Caco-2 (cell line): ENCODE measurements at regions of chr4 and their contacts with region 1.

Region 1: DNA sequence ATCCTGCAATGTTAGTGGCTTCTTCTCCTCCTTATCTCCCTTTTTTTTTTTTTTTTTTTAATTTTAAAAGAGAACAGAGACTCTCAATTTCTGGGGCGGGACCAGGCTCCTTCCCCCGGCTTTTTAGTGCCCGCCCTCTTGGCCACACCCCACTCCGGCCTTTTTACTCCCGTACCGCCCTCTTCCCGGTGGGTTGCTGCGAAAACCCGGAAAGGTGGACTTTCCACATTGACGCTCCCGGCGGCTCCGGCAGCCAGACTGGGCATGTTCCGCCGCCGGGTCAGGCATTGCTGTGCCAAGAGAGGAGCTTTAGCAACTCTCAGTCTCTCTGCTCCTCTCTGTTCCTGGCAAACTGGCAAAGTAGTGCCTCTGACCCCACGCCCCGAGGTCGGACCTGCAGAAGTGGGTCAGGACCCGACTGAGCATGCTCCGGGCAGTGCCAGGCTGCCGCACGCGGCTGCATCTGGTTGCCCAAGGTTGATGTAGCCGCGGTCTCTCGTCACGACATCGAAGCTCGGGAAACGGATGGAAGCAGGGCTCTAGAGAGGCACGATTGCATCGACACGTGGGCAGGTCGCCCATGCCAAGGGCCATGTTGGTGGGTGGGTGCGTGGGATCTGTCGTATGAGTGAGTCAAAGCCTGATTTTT is 1.1 kb upstream of the MFAP3L start:
- DNase-seq: peak; percentile 93 to 94
- H3K4me3 ChIP-seq: peak overlapping the region; percentile 78
- H3K4me3 Mint-ChIP-seq: peak overlapping the region; percentile 84
- H3K27ac Mint-ChIP-seq: peak overlapping the region; percentile 51
- H3K4me1 ChIP-seq: no peaks in the 10 kb centered on the region; the same call in 1 of the 2 replicates
- H3K4me1 Mint-ChIP-seq: no peaks in the 10 kb centered on the region
- H3K27me3 ChIP-seq: peaks cover 4% of the 10 kb centered on the region
- H3K27me3 Mint-ChIP-seq: peaks cover 17% of the 10 kb centered on the region
- CTCF ChIP-seq: no peak

Region 2: GRCh38 chr4:169757575-169758184 is 269.6 kb before region 1 on chr4 and contains the start of gene HPF1:
- CTCF ChIA-PET with region 1: no interaction called
- POLR2A ChIA-PET with region 1: no interaction called
- intact Hi-C with region 1: loop called (anchors 1 kb)
- DNase-seq: peak; percentile 92
- H3K4me3 ChIP-seq: peak within 1 kb of the TSS; percentile 81
- H3K4me3 Mint-ChIP-seq: peak within 1 kb of the TSS; percentile 77
- H3K27ac Mint-ChIP-seq: peak within 1 kb of the TSS; percentile 5
- H3K4me1 ChIP-seq: 0 out of 2 replicates have a peak, but pooled peaks cover 5% of the 10 kb centered on the region
- H3K4me1 Mint-ChIP-seq: peaks cover 12% of the 10 kb centered on the region
- H3K27me3 ChIP-seq: no peaks in the 10 kb centered on the region
- H3K27me3 Mint-ChIP-seq: no peaks in the 10 kb centered on the region
- CTCF ChIP-seq: no peak
- total RNA-seq, gene HPF1: 9.7 and 14.9 TPM in 2 replicates

Region 3: DNA sequence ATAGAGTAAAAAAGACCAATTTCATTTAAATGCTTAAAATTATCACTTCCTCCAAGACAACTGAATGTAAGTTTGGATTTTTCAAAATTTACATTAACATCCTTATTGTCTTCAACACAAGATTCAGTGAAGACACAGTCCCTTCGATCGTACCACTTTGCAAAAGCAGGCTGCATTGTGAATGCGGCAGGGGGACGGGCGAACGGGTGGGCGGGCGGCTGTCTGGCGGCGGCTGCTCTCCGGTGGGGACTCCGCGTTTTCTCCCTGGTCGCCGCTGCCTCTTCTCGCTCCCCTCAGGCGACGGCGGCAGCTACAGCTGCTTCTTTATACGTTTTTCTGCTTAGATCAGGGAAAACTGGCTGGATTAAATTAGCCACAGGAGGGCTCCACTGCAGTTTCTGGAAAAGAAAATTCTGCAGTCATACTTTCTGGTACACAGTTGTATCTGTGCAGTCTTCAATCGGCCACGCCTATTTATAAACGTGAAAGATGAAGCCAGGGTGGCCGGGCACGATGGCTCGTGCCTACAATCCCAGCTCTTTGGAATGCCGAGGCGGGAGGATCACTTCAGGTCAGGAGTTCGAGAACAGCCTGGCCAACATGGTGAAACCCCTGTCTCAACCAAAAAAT is 235.7 kb before region 1 on chr4:
- CTCF ChIA-PET with region 1: interaction called, 3 read pairs
- POLR2A ChIA-PET with region 1: no interaction called
- intact Hi-C with region 1: loop called (anchors 5 kb)
- DNase-seq: peak; percentile 58 to 60
- H3K4me3 ChIP-seq: no peak overlapping the region
- H3K4me3 Mint-ChIP-seq: peak overlapping the region; percentile 65
- H3K27ac Mint-ChIP-seq: no peak overlapping the region
- H3K4me1 ChIP-seq: no peaks in the 10 kb centered on the region
- H3K4me1 Mint-ChIP-seq: peaks cover 6% of the 10 kb centered on the region
- H3K27me3 ChIP-seq: no peaks in the 10 kb centered on the region
- H3K27me3 Mint-ChIP-seq: peaks cover 30% of the 10 kb centered on the region
- CTCF ChIP-seq: peak; percentile 49 to 55

Region 4: DNA sequence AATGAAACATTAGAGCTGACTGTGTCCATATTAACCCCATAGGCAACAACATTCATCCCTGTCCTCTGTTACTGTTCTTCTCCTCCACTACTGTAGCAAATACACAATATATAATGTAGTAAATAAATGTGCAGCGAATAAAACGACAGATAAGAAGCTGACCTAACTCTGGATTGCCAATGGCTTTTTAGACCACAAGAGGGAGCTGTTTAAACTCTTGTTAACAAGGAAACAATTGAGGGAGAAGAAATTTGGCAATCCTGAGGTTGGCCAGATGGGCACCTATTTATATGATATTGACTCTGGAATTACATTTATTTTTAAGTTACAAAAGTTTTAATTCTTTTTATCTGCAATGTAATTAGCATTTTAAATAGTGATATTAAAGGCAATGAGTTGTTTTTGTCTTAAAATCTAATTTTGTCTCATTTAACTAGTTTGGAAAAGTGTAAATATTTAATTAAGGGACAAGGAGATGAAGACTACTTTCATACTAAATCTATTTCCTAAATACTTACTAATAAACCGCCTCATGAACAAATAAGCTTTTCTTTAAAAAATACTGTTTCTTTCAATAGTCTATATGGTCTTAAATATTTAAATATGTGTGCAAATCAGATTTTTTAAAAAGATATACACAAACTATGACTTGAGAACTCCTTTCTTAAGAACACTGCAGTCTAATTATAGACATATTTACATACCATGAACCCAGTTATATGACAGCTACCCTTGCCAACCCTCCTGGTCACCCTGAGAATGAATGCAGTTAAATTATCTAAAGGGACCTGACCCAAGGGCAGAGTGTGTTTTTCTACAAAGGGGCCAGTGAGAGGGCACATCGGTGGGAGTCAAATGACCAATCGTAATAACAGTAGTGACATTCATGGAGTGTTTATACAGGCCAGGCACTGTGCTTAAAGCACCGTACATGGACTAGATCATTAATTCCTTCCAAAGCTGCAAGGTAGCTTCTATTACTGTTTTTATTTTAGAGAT is 216.7 kb before region 1 on chr4:
- CTCF ChIA-PET with region 1: no interaction called
- POLR2A ChIA-PET with region 1: no interaction called
- intact Hi-C with region 1: loop called (anchors 5 kb)
- DNase-seq: peak in 1 of 2 experiments; percentile 59
- H3K4me3 ChIP-seq: no peak overlapping the region
- H3K4me3 Mint-ChIP-seq: no peak overlapping the region
- H3K27ac Mint-ChIP-seq: no peak overlapping the region
- H3K4me1 ChIP-seq: no peaks in the 10 kb centered on the region
- H3K4me1 Mint-ChIP-seq: no peaks in the 10 kb centered on the region
- H3K27me3 ChIP-seq: no peaks in the 10 kb centered on the region
- H3K27me3 Mint-ChIP-seq: peaks cover 3% of the 10 kb centered on the region
- CTCF ChIP-seq: peak; percentile 57 to 70

Region 5: GRCh38 chr4:169902658-169903345 is 124.5 kb before region 1 on chr4:
- CTCF ChIA-PET with region 1: interaction called, 3 read pairs
- POLR2A ChIA-PET with region 1: no interaction called
- intact Hi-C with region 1: loop called (anchors 2 kb)
- DNase-seq: peak in 1 of 2 experiments; percentile 22
- H3K4me3 ChIP-seq: no peak overlapping the region
- H3K4me3 Mint-ChIP-seq: no peak overlapping the region
- H3K27ac Mint-ChIP-seq: no peak overlapping the region
- H3K4me1 ChIP-seq: no peaks in the 10 kb centered on the region
- H3K4me1 Mint-ChIP-seq: no peaks in the 10 kb centered on the region
- H3K27me3 ChIP-seq: no peaks in the 10 kb centered on the region
- H3K27me3 Mint-ChIP-seq: peaks cover 11% of the 10 kb centered on the region
- CTCF ChIP-seq: peak in 1 of 2 experiments; percentile 8

Region 6: GRCh38 chr4:169952236-169953002 is 74.9 kb before region 1 on chr4:
- CTCF ChIA-PET with region 1: no interaction called
- POLR2A ChIA-PET with region 1: no interaction called
- intact Hi-C with region 1: no loop called
- DNase-seq: no peak
- H3K4me3 ChIP-seq: no peak overlapping the region
- H3K4me3 Mint-ChIP-seq: no peak overlapping the region
- H3K27ac Mint-ChIP-seq: no peak overlapping the region
- H3K4me1 ChIP-seq: no peaks in the 10 kb centered on the region
- H3K4me1 Mint-ChIP-seq: no peaks in the 10 kb centered on the region
- H3K27me3 ChIP-seq: no peaks in the 10 kb centered on the region
- H3K27me3 Mint-ChIP-seq: peaks cover 7% of the 10 kb centered on the region
- CTCF ChIP-seq: no peak

Region 7: GRCh38 chr4:169975838-169976796 is 51.2 kb before region 1 on chr4:
- CTCF ChIA-PET with region 1: no interaction called
- POLR2A ChIA-PET with region 1: no interaction called
- intact Hi-C with region 1: loop called (anchors 5 kb)
- DNase-seq: peak; percentile 49 to 76
- H3K4me3 ChIP-seq: no peak overlapping the region
- H3K4me3 Mint-ChIP-seq: no peak overlapping the region
- H3K27ac Mint-ChIP-seq: no peak overlapping the region
- H3K4me1 ChIP-seq: peaks cover 24% of the 10 kb centered on the region
- H3K4me1 Mint-ChIP-seq: peaks cover 4% of the 10 kb centered on the region
- H3K27me3 ChIP-seq: no peaks in the 10 kb centered on the region
- H3K27me3 Mint-ChIP-seq: no peaks in the 10 kb centered on the region
- CTCF ChIP-seq: no peak

Region 8: DNA sequence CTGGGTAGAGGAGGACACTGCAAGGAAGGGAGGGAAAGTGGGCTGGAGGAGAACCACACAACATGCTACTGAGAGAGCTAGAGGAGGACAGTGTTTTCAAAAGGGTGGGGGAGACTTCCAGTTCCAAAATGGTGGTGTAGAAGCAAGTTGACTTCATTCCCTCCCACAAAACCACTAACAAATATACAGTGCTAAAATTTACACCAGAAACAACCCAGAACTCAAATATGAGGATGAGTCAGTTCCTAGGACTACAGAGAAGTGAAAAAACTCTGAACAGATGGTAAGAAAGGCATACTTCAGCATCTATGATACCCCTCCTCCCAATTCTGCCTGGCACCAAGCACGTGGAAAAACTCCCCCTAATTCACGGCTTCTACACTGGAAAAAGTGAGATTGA is 52.7 kb after region 1 on chr4:
- CTCF ChIA-PET with region 1: no interaction called
- POLR2A ChIA-PET with region 1: no interaction called
- intact Hi-C with region 1: no loop called
- DNase-seq: no peak
- H3K4me3 ChIP-seq: no peak overlapping the region
- H3K4me3 Mint-ChIP-seq: no peak overlapping the region
- H3K27ac Mint-ChIP-seq: no peak overlapping the region
- H3K4me1 ChIP-seq: no peaks in the 10 kb centered on the region
- H3K4me1 Mint-ChIP-seq: no peaks in the 10 kb centered on the region
- H3K27me3 ChIP-seq: no peaks in the 10 kb centered on the region
- H3K27me3 Mint-ChIP-seq: no peaks in the 10 kb centered on the region
- CTCF ChIP-seq: no peak

Region 9: GRCh38 chr4:170102426-170102825 is 75.1 kb after region 1 on chr4:
- CTCF ChIA-PET with region 1: no interaction called
- POLR2A ChIA-PET with region 1: no interaction called
- intact Hi-C with region 1: no loop called
- DNase-seq: peak; percentile 71 to 79
- H3K4me3 ChIP-seq: no peak overlapping the region
- H3K4me3 Mint-ChIP-seq: peak overlapping the region; percentile 19
- H3K27ac Mint-ChIP-seq: peak overlapping the region; percentile 87
- H3K4me1 ChIP-seq: peaks cover 15% of the 10 kb centered on the region
- H3K4me1 Mint-ChIP-seq: peaks cover 25% of the 10 kb centered on the region
- H3K27me3 ChIP-seq: no peaks in the 10 kb centered on the region
- H3K27me3 Mint-ChIP-seq: no peaks in the 10 kb centered on the region
- CTCF ChIP-seq: no peak